ENCODE measurements at regions of chr10 and their contacts with region 1.

Region 1: DNA sequence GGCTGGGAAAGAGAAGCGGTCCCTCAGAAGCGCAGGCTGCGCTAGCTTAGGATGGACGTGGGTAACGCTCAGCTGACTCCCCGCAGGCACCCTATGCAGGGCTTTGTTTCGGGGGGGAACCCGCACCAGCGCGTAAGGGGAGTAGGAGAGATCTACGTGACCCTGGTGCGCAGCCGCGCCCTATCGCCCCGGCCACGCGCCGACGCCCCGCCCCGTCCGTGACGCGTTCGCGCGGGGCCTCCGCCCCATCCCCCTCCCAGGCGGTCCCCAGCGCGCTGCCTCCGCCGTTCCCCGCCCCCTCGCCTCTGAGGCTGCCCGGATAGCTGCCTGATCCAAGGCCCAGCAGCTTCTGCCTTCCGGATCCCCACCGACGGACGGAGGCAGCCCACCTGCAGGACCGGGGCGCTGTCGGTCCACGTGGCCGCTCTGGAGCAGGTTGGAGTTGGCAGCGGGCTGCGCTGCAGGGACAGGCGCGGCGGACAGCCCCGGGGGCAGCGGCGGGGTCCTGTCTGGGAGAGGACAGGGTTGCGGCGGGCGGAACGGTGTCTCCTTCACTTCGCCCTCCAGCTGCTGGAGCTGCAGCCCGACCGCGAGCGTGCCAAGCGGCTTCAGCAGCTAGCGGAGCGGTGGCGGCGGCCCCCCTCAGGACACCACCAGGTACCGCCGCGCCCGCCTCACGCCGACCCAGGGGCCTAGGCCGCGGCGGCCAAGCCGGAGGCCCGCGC is at the start of gene VDAC2:
- DNase-seq: peak in 1 of 2 experiments; percentile 95
- H3K4me3 ChIP-seq: peak within 1 kb of the TSS; percentile 94 to 100 (median 96)
- H3K27ac ChIP-seq: peak within 1 kb of the TSS; percentile 100
- H3K4me1 ChIP-seq: peaks cover 5 to 20% (median 9%) of the 10 kb centered on the region in 4 experiments
- H3K27me3 ChIP-seq: no peaks in the 10 kb centered on the region
- CTCF ChIP-seq: no peak
- EP300 ChIP-seq: no peak
- POLR2A ChIP-seq: peak; percentile 50 to 89
- RAD21 ChIP-seq: no peak
- total RNA-seq, gene VDAC2: 284 and 287 TPM in 2 replicates

Region 2: DNA sequence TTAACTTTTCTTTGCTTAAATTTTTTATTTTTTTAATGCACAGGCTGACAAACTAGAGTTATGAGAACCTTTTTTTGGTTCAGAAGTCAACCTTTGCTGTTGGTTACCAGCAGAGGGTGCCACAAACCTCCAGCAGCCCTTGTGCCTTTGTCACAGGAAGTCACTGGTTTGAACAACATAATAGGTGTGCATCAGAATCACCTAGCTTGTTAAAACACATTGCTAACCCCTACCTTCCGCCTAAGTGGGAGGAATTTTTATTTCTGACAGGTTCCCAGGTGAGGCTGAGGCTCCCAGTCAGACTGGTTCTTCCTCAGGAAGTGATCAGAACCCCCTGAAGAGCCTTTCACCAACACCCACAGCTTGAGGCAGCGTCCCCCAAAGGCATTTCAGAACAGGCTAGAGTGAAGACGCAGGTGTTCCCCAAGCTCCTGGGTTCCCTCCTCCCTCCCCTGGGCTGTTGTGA is 22.4 kb before region 1 on chr10:
- CTCF ChIA-PET with region 1: interaction called, 22 read pairs
- POLR2A ChIA-PET with region 1: interaction called, 801 read pairs
- DNase-seq: peak; percentile 56 to 61
- H3K4me3 ChIP-seq: no peak overlapping the region
- H3K27ac ChIP-seq: peak overlapping the region; percentile 2; the same call in 1 of the 2 replicates
- H3K4me1 ChIP-seq: peaks cover 0 to 12% (median 7%) of the 10 kb centered on the region in 4 experiments; a peak in 5 of 7 replicates
- H3K27me3 ChIP-seq: no peaks in the 10 kb centered on the region
- CTCF ChIP-seq: peak; percentile 46 to 73 (median 64)
- EP300 ChIP-seq: 0 out of 3 replicates have a peak, but pooled peaks of 1 of the 2 experiments have one; percentile 33
- POLR2A ChIP-seq: peak in 1 of 2 experiments; percentile 44; a peak in 1 of 3 replicates
- RAD21 ChIP-seq: peak; percentile 73 to 77

Region 3: GRCh38 chr10:75195035-75195763 is 15.2 kb before region 1 on chr10:
- CTCF ChIA-PET with region 1: interaction called, 15 read pairs
- POLR2A ChIA-PET with region 1: interaction called, 801 read pairs
- DNase-seq: no peak
- H3K4me3 ChIP-seq: no peak overlapping the region
- H3K27ac ChIP-seq: no peak overlapping the region
- H3K4me1 ChIP-seq: no peaks in the 10 kb centered on the region
- H3K27me3 ChIP-seq: no peaks in the 10 kb centered on the region
- CTCF ChIP-seq: no peak
- EP300 ChIP-seq: no peak
- POLR2A ChIP-seq: no peak
- RAD21 ChIP-seq: no peak

Region 4: GRCh38 chr10:75226656-75227055 is 16.2 kb after region 1 on chr10:
- CTCF ChIA-PET with region 1: interaction called, 128 read pairs
- POLR2A ChIA-PET with region 1: interaction called, 801 read pairs
- DNase-seq: no peak
- H3K4me3 ChIP-seq: peak overlapping the region in 1 of 4 experiments; percentile 4; a peak in 1 of 8 replicates
- H3K27ac ChIP-seq: no peak overlapping the region
- H3K4me1 ChIP-seq: peaks cover 14 to 42% (median 32%) of the 10 kb centered on the region in 4 experiments
- H3K27me3 ChIP-seq: no peaks in the 10 kb centered on the region
- CTCF ChIP-seq: no peak
- EP300 ChIP-seq: no peak
- POLR2A ChIP-seq: no peak
- RAD21 ChIP-seq: no peak

Measured in H1 (cell line).